GM12878 (cell line): ENCODE measurements at regions of chr3 and their contacts with region 1.

Region 1: GRCh38 chr3:39000008-39000450 is 51.7 kb downstream of the SCN11A start:
- DNase-seq: peak; percentile 35
- ATAC-seq: peak; percentile 96
- H3K4me3 ChIP-seq: no peak overlapping the region
- H3K27ac ChIP-seq: no peak overlapping the region
- H3K4me1 ChIP-seq: no peaks in the 10 kb centered on the region
- H3K27me3 ChIP-seq: no peaks in the 10 kb centered on the region
- CTCF ChIP-seq: peak; percentile 79 to 95 (median 93)
- EP300 ChIP-seq: no peak
- POLR2A ChIP-seq: no peak
- RAD21 ChIP-seq: peak; percentile 79

Region 2: DNA sequence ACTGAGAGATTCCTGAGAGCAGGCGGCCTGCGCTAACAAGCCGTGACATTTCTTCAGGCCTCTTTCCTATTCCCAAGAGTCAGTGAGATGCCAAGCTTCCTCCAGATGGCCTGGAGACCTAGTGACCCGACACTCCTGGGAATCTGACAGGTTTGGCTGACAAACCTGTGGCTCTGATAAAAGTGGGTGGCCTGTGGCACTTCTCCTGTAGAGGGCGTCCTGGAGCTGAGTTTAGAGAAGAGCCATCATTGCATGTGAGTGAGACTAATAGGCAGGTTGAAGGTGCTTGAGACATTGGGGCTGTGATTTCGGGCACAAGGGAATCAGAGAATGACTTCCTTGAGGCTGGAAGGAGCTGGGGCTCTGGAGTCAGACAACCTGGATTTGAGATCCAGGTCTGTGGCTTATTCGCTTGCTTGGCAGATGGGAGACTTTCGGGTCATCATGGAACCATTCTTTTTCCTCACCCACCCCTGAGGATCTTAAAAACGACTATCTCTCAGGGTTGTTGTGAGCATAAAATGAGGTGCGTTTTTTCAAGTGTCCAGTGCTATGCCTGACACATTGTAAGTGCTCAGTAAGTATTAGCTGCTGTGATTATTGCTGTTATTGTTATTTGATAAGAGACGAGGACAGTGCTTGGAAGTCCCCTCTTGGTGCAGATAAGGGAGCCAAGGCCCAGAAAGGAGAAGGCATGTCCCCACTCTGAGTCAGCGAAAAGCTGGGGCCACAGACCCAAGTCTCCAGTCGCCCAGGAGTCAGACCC is 261.2 kb before region 1 on chr3:
- CTCF ChIA-PET with region 1: interaction called, 16 read pairs
- POLR2A ChIA-PET with region 1: no interaction called
- RAD21 ChIA-PET with region 1: interaction called, 9 read pairs
- SMC1A ChIA-PET with region 1: interaction called, 11 read pairs
- in situ Hi-C with region 1: no loop called
- intact Hi-C with region 1: no loop called
- DNase-seq: no peak
- ATAC-seq: peak; percentile 65
- H3K4me3 ChIP-seq: no peak overlapping the region
- H3K27ac ChIP-seq: no peak overlapping the region
- H3K4me1 ChIP-seq: no peaks in the 10 kb centered on the region
- H3K27me3 ChIP-seq: peaks cover 0 to 3% of the 10 kb centered on the region in 2 experiments; a peak in 2 of 4 replicates
- CTCF ChIP-seq: peak; percentile 49 to 63 (median 60)
- EP300 ChIP-seq: no peak
- POLR2A ChIP-seq: no peak
- RAD21 ChIP-seq: peak; percentile 46

Region 3: DNA sequence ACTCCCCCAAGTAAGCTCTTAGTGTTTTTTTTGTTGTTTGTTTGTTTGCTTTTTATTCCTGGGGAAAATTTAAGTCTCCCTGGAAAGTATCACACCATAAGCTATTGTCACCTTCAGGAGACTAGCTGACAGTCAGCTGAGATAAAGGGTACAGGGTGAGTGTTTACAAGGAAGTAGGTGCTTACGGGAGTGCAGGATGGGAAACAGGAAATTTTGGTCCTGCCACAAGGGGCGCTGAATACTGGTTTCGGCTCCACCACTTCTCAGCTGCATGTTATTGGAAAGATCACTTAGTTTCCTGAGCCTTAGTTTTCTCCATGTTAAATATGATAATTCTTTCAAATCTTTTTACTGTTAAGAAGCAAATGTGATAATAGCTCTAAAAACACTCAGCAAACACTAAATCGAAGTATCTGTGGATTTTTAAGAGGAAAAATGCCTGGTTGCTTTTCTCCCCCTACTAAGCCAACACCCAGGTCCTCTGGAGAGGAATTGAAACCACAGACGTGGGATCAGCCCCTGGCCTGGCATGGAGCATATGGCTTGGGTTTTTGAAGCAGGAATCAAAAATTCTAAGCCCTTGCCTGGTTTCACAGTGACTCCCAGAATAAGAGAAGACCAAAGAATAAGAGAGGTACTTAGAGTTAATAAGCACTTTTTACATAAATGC is 38.9 kb before region 1 on chr3:
- CTCF ChIA-PET with region 1: interaction called, 11 read pairs
- POLR2A ChIA-PET with region 1: no interaction called
- RAD21 ChIA-PET with region 1: no interaction called
- SMC1A ChIA-PET with region 1: interaction called, 3 read pairs
- in situ Hi-C with region 1: no loop called
- intact Hi-C with region 1: no loop called
- DNase-seq: peak; percentile 8
- ATAC-seq: peak; percentile 87
- H3K4me3 ChIP-seq: no peak overlapping the region
- H3K27ac ChIP-seq: no peak overlapping the region
- H3K4me1 ChIP-seq: no peaks in the 10 kb centered on the region
- H3K27me3 ChIP-seq: peaks cover 0 to 2% of the 10 kb centered on the region in 2 experiments; a peak in 2 of 4 replicates
- CTCF ChIP-seq: peak; percentile 45 to 68 (median 53)
- EP300 ChIP-seq: no peak
- POLR2A ChIP-seq: no peak
- RAD21 ChIP-seq: no peak

Region 4: GRCh38 chr3:39013289-39013688 is 13.3 kb after region 1 on chr3:
- CTCF ChIA-PET with region 1: interaction called, 62 read pairs
- POLR2A ChIA-PET with region 1: no interaction called
- RAD21 ChIA-PET with region 1: interaction called, 7 read pairs
- SMC1A ChIA-PET with region 1: interaction called, 41 read pairs
- in situ Hi-C with region 1: no loop called
- intact Hi-C with region 1: no loop called
- DNase-seq: no peak
- ATAC-seq: no peak
- H3K4me3 ChIP-seq: no peak overlapping the region
- H3K27ac ChIP-seq: no peak overlapping the region
- H3K4me1 ChIP-seq: no peaks in the 10 kb centered on the region
- H3K27me3 ChIP-seq: no peaks in the 10 kb centered on the region
- CTCF ChIP-seq: no peak
- EP300 ChIP-seq: no peak
- POLR2A ChIP-seq: no peak
- RAD21 ChIP-seq: no peak

Region 5: GRCh38 chr3:39021029-39021428 is 21.0 kb after region 1 on chr3:
- CTCF ChIA-PET with region 1: interaction called, 241 read pairs
- POLR2A ChIA-PET with region 1: interaction called, 3 read pairs
- RAD21 ChIA-PET with region 1: interaction called, 96 read pairs
- SMC1A ChIA-PET with region 1: interaction called, 145 read pairs
- in situ Hi-C with region 1: no loop called
- intact Hi-C with region 1: no loop called
- DNase-seq: peak; percentile 54
- ATAC-seq: peak; percentile 79
- H3K4me3 ChIP-seq: no peak overlapping the region
- H3K27ac ChIP-seq: no peak overlapping the region
- H3K4me1 ChIP-seq: peaks cover 3% of the 10 kb centered on the region; the same call in 1 of the 2 replicates
- H3K27me3 ChIP-seq: no peaks in the 10 kb centered on the region
- CTCF ChIP-seq: no peak
- EP300 ChIP-seq: no peak; a peak in 1 of 4 replicates
- POLR2A ChIP-seq: no peak
- RAD21 ChIP-seq: no peak

Region 6: DNA sequence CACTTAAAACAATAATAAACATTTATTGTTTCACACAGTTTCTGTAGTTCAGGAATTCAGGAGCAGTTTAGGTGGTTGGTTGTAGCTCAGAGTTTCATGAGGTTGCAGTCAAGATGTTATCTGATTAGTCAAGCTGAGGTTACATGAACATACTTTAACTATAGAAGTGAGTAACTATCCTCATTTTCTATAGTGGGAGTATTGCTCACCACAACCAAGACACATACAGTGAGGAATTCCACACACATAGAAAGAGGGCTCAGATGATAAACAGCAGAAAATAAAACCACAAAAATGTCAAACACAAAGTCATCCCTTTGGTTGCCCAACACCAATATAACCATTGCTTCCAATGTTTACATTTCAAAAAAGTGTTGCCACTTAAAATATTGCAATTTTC is 38.1 kb after region 1 on chr3:
- CTCF ChIA-PET with region 1: interaction called, 11 read pairs
- POLR2A ChIA-PET with region 1: no interaction called
- RAD21 ChIA-PET with region 1: no interaction called
- SMC1A ChIA-PET with region 1: interaction called, 6 read pairs
- in situ Hi-C with region 1: no loop called
- intact Hi-C with region 1: no loop called
- DNase-seq: no peak
- ATAC-seq: no peak
- H3K4me3 ChIP-seq: no peak overlapping the region
- H3K27ac ChIP-seq: no peak overlapping the region
- H3K4me1 ChIP-seq: no peaks in the 10 kb centered on the region
- H3K27me3 ChIP-seq: no peaks in the 10 kb centered on the region
- CTCF ChIP-seq: no peak
- EP300 ChIP-seq: no peak
- POLR2A ChIP-seq: no peak
- RAD21 ChIP-seq: no peak

Region 7: GRCh38 chr3:39090922-39091321 is 90.9 kb after region 1 on chr3:
- CTCF ChIA-PET with region 1: no interaction called
- POLR2A ChIA-PET with region 1: no interaction called
- RAD21 ChIA-PET with region 1: no interaction called
- SMC1A ChIA-PET with region 1: no interaction called
- in situ Hi-C with region 1: no loop called
- intact Hi-C with region 1: no loop called
- DNase-seq: no peak
- ATAC-seq: no peak
- H3K4me3 ChIP-seq: no peak overlapping the region
- H3K27ac ChIP-seq: no peak overlapping the region
- H3K4me1 ChIP-seq: 0 out of 2 replicates have a peak, but pooled peaks cover 2% of the 10 kb centered on the region
- H3K27me3 ChIP-seq: no peaks in the 10 kb centered on the region
- CTCF ChIP-seq: no peak
- EP300 ChIP-seq: no peak
- POLR2A ChIP-seq: no peak
- RAD21 ChIP-seq: no peak

Region 8: DNA sequence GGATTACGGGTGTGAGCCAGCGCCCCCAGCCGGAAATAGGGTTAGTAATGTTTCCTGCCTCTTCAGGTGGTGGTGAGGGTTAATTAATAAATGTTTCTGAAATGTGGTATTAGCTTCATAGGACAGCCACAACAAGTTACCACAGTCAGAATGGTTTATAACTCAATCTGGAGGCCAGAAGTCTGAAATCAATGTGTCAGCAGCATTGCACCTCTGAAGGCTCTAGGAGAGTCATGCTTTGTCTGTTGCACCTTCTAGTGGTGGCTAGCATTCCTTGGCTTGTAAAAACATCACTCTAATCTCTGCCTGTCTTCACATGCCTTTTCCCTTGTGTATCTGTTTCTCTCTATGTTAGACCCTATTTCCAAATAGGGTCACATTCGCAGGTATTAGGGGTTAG is 398.7 kb after region 1 on chr3:
- CTCF ChIA-PET with region 1: no interaction called
- POLR2A ChIA-PET with region 1: no interaction called
- RAD21 ChIA-PET with region 1: no interaction called
- SMC1A ChIA-PET with region 1: no interaction called
- in situ Hi-C with region 1: no loop called
- intact Hi-C with region 1: no loop called
- DNase-seq: no peak
- ATAC-seq: peak; percentile 49; the same call in 2 of the 3 replicates
- H3K4me3 ChIP-seq: no peak overlapping the region
- H3K27ac ChIP-seq: no peak overlapping the region
- H3K4me1 ChIP-seq: no peaks in the 10 kb centered on the region
- H3K27me3 ChIP-seq: no peaks in the 10 kb centered on the region
- CTCF ChIP-seq: peak in 2 of 3 experiments; percentile 3 to 14; a peak in 1 of 6 replicates
- EP300 ChIP-seq: no peak
- POLR2A ChIP-seq: no peak
- RAD21 ChIP-seq: 0 out of 2 replicates have a peak, but pooled peaks have one; percentile 18